ENCODE measurements at regions of chr14 and their contacts with region 1.

Region 1: DNA sequence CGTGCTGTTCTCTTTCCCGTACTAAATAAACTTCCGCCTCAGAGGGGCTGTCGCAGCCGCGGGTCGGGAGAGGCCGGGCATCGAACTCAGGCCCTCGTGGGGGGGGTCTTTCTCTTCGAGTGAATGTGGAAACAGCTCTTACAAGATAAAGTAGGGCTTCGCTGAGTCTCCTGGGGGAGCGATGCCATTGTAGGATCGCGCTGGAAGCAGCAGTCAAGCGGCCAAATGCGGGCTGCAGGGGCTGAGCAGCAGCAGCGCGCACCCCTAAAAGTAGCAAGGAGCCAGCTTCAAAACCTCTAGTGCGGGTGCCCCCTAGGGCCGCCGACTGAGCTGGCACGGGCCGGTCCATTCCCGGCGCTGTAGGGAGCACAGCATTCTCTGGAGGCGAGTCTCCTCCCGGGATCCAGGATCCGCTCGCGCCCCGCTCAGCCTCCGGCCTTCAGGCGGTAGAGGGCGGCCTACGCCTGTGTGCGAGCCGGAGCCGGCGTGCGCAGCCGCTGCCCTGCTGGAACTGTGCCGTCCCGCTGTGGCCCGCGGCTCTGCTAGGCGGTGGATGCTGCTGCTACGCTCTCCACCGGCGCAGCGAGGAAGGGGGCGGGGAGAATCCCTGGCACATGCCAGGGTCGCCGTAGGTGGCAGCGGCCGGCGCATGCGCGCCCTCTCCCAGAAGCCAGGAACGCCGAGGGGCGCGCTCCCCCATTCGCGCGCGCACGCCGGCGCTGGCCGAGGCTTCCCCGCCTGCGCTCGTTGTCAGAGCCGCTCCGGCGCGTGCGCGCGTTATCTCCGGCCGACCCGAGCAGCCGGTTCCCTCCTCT is at the start of gene FUT8:
- DNase-seq: peak; percentile 90 to 97 (median 95)
- ATAC-seq: peak; percentile 93
- H3K4me3 ChIP-seq: peak within 1 kb of the TSS; percentile 92
- H3K4me3 Mint-ChIP-seq: peak within 1 kb of the TSS; percentile 85 to 99 (median 97)
- H3K27ac ChIP-seq: peak within 1 kb of the TSS; percentile 86
- H3K27ac Mint-ChIP-seq: peak within 1 kb of the TSS; percentile 93 to 99 (median 96)
- H3K4me1 ChIP-seq: peaks cover 0 to 14% of the 10 kb centered on the region in 2 donors
- H3K4me1 Mint-ChIP-seq: peaks cover 23 to 52% (median 48%) of the 10 kb centered on the region in 7 donors
- H3K27me3 ChIP-seq: no peaks in the 10 kb centered on the region
- H3K27me3 Mint-ChIP-seq: no peaks in the 10 kb centered on the region
- total RNA-seq, gene FUT8: 38.4 to 107 (median 43.4) TPM

Region 2: GRCh38 chr14:65164068-65164824 is 248.0 kb before region 1 on chr14:
- CTCF ChIA-PET with region 1: interaction called, 24 read pairs
- POLR2A ChIA-PET with region 1: interaction called, 12 read pairs
- intact Hi-C with region 1: loop called (anchors 1 kb)
- DNase-seq: peak in 7 of 9 donors; percentile 29 to 67 (median 58)
- ATAC-seq: peak; percentile 76
- H3K4me3 ChIP-seq: no peak overlapping the region
- H3K4me3 Mint-ChIP-seq: no peak overlapping the region
- H3K27ac ChIP-seq: no peak overlapping the region
- H3K27ac Mint-ChIP-seq: peak overlapping the region in 1 of 9 donors; percentile 67
- H3K4me1 ChIP-seq: no peaks in the 10 kb centered on the region
- H3K4me1 Mint-ChIP-seq: peaks cover 0 to 43% (median 0%) of the 10 kb centered on the region in 7 donors
- H3K27me3 ChIP-seq: no peaks in the 10 kb centered on the region
- H3K27me3 Mint-ChIP-seq: no peaks in the 10 kb centered on the region

Region 3: DNA sequence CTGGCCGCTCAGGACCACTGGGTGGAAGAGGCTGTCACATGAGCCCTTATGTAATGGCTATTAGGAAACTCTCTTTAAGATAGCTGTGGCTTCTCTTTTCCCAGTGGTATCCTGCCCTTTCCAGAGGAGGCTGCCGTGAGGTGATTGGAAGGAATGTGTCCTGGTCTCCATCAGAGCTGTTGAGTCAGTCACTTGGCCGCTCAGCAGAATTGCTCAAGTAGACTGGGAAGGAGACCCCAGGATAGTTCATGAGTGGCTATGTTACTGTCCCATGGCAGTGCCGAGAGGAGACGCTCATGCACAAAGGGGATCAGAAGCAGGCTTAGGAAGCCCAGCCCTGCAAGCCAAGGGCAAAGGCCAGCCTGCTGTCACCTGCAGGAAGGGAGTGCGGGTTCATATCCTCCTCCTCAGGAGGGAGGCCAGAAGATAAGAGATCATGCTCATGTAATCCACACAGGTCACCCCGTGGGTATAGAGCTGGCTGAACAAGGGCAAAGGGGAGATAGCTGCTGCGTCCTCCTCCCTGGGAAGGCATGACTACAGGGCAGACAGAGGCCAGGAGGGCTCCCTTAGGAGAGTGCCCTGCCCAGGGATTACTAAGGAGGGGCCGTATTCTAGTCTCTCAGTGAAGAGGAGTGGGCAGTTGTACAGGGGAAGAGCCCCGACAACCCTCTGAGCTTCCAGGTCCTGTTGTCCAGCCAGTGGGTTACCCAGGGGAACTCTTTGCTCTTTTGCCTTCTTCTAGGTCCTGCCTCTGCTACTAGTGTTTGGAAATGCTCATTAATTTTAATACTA is 172.9 kb before region 1 on chr14:
- CTCF ChIA-PET with region 1: no interaction called
- POLR2A ChIA-PET with region 1: no interaction called
- intact Hi-C with region 1: no loop called
- DNase-seq: no peak
- ATAC-seq: no peak
- H3K4me3 ChIP-seq: no peak overlapping the region
- H3K4me3 Mint-ChIP-seq: no peak overlapping the region
- H3K27ac ChIP-seq: no peak overlapping the region
- H3K27ac Mint-ChIP-seq: peak overlapping the region in 2 of 9 donors; percentile 27 to 65
- H3K4me1 ChIP-seq: peaks cover 0 to 9% of the 10 kb centered on the region in 2 donors
- H3K4me1 Mint-ChIP-seq: peaks cover 0 to 15% (median under 1%) of the 10 kb centered on the region in 7 donors
- H3K27me3 ChIP-seq: no peaks in the 10 kb centered on the region
- H3K27me3 Mint-ChIP-seq: no peaks in the 10 kb centered on the region

Region 4: DNA sequence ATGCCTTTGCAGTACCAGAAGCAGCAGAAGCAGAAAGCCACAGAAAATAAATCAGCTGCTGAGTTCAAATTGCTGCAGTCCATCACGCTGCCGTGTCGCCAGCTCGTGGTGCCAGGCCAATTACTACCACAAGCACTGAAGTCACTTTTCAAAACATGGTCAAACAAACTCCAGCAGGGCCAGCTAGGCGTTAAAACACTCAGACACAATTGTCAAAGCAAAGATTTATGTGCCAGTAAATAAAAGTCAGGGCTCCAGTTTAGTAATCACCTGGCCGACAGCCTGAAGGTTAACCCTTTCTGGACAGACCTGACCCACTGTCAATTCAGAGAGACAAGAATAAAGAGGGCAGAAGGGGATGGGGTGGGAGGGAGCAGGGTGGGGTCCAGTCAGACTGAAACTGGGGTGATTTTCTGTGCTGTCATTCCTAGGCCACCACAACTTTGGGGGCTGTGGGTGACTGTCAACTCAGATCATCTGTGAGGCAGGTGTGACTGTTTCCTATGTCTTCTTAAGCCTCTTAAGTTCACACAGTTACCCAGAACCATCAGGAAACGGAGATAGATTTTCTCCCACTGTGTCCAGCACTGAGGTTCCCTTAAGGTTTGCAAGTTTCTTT is 109.6 kb before region 1 on chr14:
- CTCF ChIA-PET with region 1: no interaction called
- POLR2A ChIA-PET with region 1: interaction called, 3 read pairs
- intact Hi-C with region 1: loop called in 1 of 2 experiments (anchors 5 kb)
- DNase-seq: peak in 1 of 9 donors; percentile 56
- ATAC-seq: peak; percentile 38
- H3K4me3 ChIP-seq: no peak overlapping the region
- H3K4me3 Mint-ChIP-seq: peak overlapping the region in 3 of 10 donors; percentile 4 to 51 (median 48)
- H3K27ac ChIP-seq: no peak overlapping the region
- H3K27ac Mint-ChIP-seq: peak overlapping the region in 7 of 9 donors; percentile 15 to 93 (median 47)
- H3K4me1 ChIP-seq: peaks cover 16 to 25% of the 10 kb centered on the region in 2 donors
- H3K4me1 Mint-ChIP-seq: peaks cover 37 to 76% (median 71%) of the 10 kb centered on the region in 7 donors
- H3K27me3 ChIP-seq: no peaks in the 10 kb centered on the region
- H3K27me3 Mint-ChIP-seq: no peaks in the 10 kb centered on the region

Region 5: DNA sequence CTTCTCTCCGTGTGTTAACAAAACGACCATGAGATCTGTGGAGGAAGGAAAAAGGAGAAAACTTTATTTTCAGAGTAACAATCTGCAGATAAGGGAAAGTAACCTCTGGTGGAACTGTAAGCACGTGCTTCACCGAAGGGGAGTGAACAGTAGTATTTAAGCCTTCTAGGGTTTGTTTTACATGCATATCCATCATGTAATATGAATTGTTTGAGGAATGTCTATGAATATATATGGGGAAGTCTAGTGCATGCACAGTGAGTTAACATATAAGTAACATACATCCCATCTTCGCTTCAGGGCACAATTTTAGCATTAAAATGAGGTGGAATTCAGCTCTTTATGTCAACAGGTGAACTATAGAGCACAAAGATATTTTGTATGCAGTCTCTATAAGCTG is 101.4 kb after region 1 on chr14:
- CTCF ChIA-PET with region 1: no interaction called
- POLR2A ChIA-PET with region 1: no interaction called
- intact Hi-C with region 1: no loop called
- DNase-seq: no peak
- ATAC-seq: no peak
- H3K4me3 ChIP-seq: no peak overlapping the region
- H3K4me3 Mint-ChIP-seq: peak overlapping the region in 1 of 10 donors; percentile 8
- H3K27ac ChIP-seq: no peak overlapping the region
- H3K27ac Mint-ChIP-seq: peak overlapping the region in 1 of 9 donors; percentile 5
- H3K4me1 ChIP-seq: no peaks in the 10 kb centered on the region
- H3K4me1 Mint-ChIP-seq: peaks cover 22 to 88% (median 75%) of the 10 kb centered on the region in 7 donors
- H3K27me3 ChIP-seq: no peaks in the 10 kb centered on the region
- H3K27me3 Mint-ChIP-seq: no peaks in the 10 kb centered on the region

Region 6: GRCh38 chr14:65824285-65824977 is 412.2 kb after region 1 on chr14:
- CTCF ChIA-PET with region 1: interaction called, 19 read pairs
- POLR2A ChIA-PET with region 1: interaction called, 3 read pairs
- intact Hi-C with region 1: loop called (anchors 1 to 2 kb)
- DNase-seq: peak in 8 of 9 donors; percentile 38 to 71 (median 60)
- ATAC-seq: peak; percentile 93
- H3K4me3 ChIP-seq: no peak overlapping the region
- H3K4me3 Mint-ChIP-seq: peak overlapping the region in 1 of 10 donors; percentile 39
- H3K27ac ChIP-seq: no peak overlapping the region
- H3K27ac Mint-ChIP-seq: peak overlapping the region in 3 of 9 donors; percentile 0 to 66 (median 66)
- H3K4me1 ChIP-seq: peaks cover 6 to 8% of the 10 kb centered on the region in 2 donors
- H3K4me1 Mint-ChIP-seq: peaks cover 3 to 33% (median 14%) of the 10 kb centered on the region in 7 donors
- H3K27me3 ChIP-seq: no peaks in the 10 kb centered on the region
- H3K27me3 Mint-ChIP-seq: peaks cover 0 to 7% (median 0%) of the 10 kb centered on the region in 5 donors

Region 7: DNA sequence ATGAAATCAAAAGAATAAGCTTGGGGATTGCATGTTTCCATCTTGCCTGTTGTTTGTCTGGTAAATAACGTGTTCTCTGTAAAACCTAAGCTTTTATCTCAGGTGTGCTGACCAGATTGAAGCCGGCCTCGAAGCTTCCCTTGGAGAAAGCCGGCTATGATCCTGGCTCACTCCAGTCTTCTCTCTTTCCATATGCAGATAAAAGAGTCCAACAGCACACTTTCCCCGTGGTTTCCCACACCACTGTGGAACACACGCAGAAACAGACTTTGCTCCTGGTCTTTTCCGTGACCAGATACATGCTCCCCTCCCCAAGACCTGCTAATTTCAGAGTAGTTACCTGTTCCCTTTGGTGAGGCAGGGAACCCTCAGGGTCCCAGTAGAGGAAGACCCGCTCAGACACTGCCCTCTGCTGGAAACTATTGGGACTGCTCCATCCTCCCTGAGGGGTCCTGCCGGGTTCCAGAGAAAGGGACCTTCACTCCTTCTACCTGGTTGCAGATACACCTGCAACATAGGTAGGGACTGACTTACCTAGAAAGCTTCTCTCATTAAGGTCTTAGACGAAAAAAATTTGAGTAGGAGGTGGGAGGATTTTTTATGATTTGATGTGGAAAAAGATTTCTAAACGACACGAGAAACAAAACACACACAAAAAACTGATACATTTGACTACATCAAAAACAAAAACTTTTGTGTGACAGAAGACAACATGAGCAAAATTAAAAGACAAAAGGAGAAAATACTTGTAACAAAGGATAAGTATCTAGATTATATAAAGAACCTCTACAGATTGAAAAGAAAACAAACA is 658.5 kb after region 1 on chr14:
- CTCF ChIA-PET with region 1: interaction called, 81 read pairs
- POLR2A ChIA-PET with region 1: interaction called, 3 read pairs
- intact Hi-C with region 1: loop called (anchors 1 kb)
- DNase-seq: peak; percentile 41 to 76 (median 62)
- ATAC-seq: peak; percentile 91
- H3K4me3 ChIP-seq: no peak overlapping the region
- H3K4me3 Mint-ChIP-seq: no peak overlapping the region
- H3K27ac ChIP-seq: no peak overlapping the region
- H3K27ac Mint-ChIP-seq: peak overlapping the region in 1 of 9 donors; percentile 28
- H3K4me1 ChIP-seq: no peaks in the 10 kb centered on the region
- H3K4me1 Mint-ChIP-seq: peaks cover 4 to 12% (median 8%) of the 10 kb centered on the region in 7 donors
- H3K27me3 ChIP-seq: no peaks in the 10 kb centered on the region
- H3K27me3 Mint-ChIP-seq: peaks cover 0 to 20% (median 6%) of the 10 kb centered on the region in 5 donors

Region 8: GRCh38 chr14:67240978-67241414 is 1828.8 kb after region 1 on chr14:
- CTCF ChIA-PET with region 1: no interaction called
- POLR2A ChIA-PET with region 1: no interaction called
- intact Hi-C with region 1: loop called in 1 of 2 experiments (anchors 5 kb)
- DNase-seq: peak; percentile 87 to 93 (median 91)
- ATAC-seq: peak; percentile 97
- H3K4me3 ChIP-seq: peak overlapping the region; percentile 84
- H3K4me3 Mint-ChIP-seq: peak overlapping the region; percentile 81 to 95 (median 91)
- H3K27ac ChIP-seq: peak overlapping the region; percentile 74
- H3K27ac Mint-ChIP-seq: peak overlapping the region; percentile 8 to 92 (median 85)
- H3K4me1 ChIP-seq: peaks cover 6 to 10% of the 10 kb centered on the region in 2 donors
- H3K4me1 Mint-ChIP-seq: peaks cover 16 to 37% (median 28%) of the 10 kb centered on the region in 7 donors
- H3K27me3 ChIP-seq: no peaks in the 10 kb centered on the region
- H3K27me3 Mint-ChIP-seq: peaks cover 0 to 33% (median 0%) of the 10 kb centered on the region in 5 donors

Measured in naive thymus-derived CD4-positive, alpha-beta T cell (primary cell).